Calu3 (cell line): ENCODE measurements at regions of chr14 and their contacts with region 1.

Region 1: GRCh38 chr14:105203057-105203531 is 22.0 kb upstream of the NUDT14 start:
- DNase-seq: peak; percentile 84
- H3K4me3 Mint-ChIP-seq: no peak overlapping the region
- H3K27ac Mint-ChIP-seq: no peak overlapping the region
- H3K4me1 Mint-ChIP-seq: peaks cover 15% of the 10 kb centered on the region
- H3K27me3 Mint-ChIP-seq: peaks cover 27% of the 10 kb centered on the region
- CTCF ChIP-seq: peak; percentile 94

Region 2: DNA sequence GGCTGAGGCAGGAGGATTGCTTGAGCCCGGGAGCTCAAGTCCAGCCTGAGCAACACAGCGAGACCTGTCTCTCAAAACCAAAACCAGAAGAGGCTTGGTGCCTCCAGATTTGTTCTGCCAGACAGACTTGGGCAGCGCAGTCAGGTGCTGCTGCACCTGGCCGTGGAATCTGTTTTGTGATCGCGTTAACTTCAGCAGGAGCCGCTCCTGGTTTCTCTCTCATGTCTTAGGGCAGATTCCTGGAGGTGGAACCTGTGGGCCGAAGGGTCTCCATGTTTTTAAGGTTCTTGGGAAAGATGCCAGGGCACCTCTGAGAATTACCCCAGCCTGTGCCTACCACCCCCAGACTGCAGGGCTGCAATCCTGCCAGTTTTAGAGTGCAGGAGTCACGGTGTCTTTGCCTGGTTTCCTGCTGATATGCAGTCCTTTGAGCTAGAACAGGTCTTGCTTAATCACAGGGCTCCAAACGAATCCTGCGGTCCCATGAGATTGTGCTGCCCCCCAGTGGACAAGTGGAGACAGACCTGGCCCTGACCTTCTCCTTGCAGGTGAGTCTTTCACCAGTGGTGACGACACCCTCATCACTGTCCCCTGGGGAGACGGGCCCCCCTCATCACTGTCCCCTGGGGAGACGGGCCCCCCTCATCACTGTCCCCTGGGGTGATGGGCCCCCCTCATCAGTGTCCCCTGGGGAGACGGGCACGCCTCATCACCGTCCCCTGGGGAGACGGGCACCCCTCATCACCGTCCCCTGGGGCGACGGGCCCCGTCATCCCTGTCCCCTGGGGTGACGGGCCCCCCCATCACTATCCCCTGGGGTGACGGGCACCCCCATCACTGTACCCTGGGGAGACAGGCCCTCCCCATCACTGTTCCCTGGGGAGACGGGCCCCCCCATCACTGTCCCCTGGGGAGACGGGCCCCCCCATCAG is 149.1 kb after region 1 on chr14:
- CTCF ChIA-PET with region 1: interaction called, 6 read pairs
- intact Hi-C with region 1: loop called (anchors 1 kb)
- DNase-seq: peak; percentile 90
- H3K4me3 Mint-ChIP-seq: no peak overlapping the region
- H3K27ac Mint-ChIP-seq: no peak overlapping the region
- H3K4me1 Mint-ChIP-seq: no peaks in the 10 kb centered on the region
- H3K27me3 Mint-ChIP-seq: no peaks in the 10 kb centered on the region
- CTCF ChIP-seq: peak; percentile 83